Heart right ventricle (tissue), 16 donors: ENCODE measurements at regions of chr1 and their contacts with region 1.

Region 1: DNA sequence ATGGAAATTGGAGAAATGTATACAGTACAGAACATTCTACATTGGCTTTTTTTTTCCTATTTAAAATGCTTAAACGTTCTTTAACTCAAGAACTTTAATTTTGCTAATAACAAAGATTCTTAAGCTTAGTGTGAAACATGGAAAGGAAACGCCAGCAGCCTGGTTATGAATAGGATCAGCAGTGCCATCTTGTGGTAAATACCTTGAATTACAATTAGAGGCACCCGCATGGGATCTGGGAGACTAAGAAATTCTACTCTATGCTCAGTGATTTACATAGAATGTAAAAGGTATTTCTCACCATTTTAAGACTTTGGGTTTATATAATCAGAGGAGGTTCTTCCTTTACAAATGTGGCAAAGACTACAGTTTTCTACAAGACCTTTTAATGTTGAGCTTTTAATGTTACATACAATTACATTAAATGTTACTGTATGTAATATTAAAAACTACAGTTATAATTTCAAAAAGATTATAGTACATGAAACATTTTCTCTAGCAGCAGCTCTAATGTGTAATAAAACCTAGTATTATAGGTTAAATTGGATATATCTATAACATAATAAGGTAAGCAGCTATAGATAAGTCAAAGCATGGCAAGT is 32.1 kb upstream of the APOBEC4 start:
- DNase-seq: peak in 1 of 2 donors; percentile 29
- ATAC-seq: peak in 5 of 8 donors; percentile 61 to 79 (median 72)
- H3K4me3 ChIP-seq: no peak overlapping the region
- H3K27ac ChIP-seq: no peak overlapping the region
- H3K4me1 ChIP-seq: peaks cover 0 to 32% (median 4%) of the 10 kb centered on the region in 9 donors
- H3K27me3 ChIP-seq: no peaks in the 10 kb centered on the region
- CTCF ChIP-seq: peak; percentile 67 to 90 (median 84)

Region 2: GRCh38 chr1:183635606-183636333 is 49.4 kb before region 1 on chr1 and contains the start of gene ARPC5:
- intact Hi-C with region 1: no loop called
- DNase-seq: peak; percentile 96 to 98
- ATAC-seq: peak; percentile 95 to 98 (median 96)
- H3K4me3 ChIP-seq: peak within 1 kb of the TSS; percentile 67 to 92 (median 86)
- H3K27ac ChIP-seq: peak within 1 kb of the TSS; percentile 68 to 98 (median 94)
- H3K4me1 ChIP-seq: peaks cover 3 to 54% (median 42%) of the 10 kb centered on the region in 9 donors
- H3K27me3 ChIP-seq: no peaks in the 10 kb centered on the region
- CTCF ChIP-seq: no peak
- total RNA-seq, gene ARPC5: 23.8 to 60.2 (median 28.1) TPM

Region 3: DNA sequence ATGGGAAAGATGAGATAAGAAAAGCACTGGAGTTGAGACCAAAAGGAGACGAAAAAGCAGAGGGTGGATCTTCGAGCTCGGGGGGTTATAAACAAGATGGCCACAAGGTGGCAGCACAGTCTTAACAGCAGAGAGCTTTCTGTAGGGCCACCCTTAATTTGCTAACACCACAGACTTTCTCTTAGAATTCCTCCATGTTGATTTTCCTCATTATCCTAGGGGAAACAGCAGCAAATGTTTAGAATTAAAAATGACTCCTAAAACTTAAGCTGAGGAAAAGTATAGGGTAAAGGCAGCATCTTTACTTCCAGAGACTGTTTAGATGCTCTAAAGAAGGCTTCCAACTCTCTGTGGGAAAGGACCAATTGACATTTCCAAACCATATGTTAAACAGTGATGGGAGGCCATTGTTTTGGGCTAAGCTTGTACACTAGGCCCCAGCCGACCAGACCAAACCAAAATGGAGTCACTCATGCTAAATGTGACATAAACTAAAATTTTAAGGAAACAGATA is 29.6 kb before region 1 on chr1:
- intact Hi-C with region 1: loop called in 2 of 10 experiments (anchors 5 kb)
- DNase-seq: peak; percentile 67 to 84
- ATAC-seq: peak; percentile 62 to 89 (median 83)
- H3K4me3 ChIP-seq: no peak overlapping the region
- H3K27ac ChIP-seq: peak overlapping the region in 1 of 10 donors; percentile 78
- H3K4me1 ChIP-seq: peaks cover 6 to 56% (median 41%) of the 10 kb centered on the region in 9 donors
- H3K27me3 ChIP-seq: no peaks in the 10 kb centered on the region
- CTCF ChIP-seq: peak; percentile 84 to 95 (median 92)

Region 4: DNA sequence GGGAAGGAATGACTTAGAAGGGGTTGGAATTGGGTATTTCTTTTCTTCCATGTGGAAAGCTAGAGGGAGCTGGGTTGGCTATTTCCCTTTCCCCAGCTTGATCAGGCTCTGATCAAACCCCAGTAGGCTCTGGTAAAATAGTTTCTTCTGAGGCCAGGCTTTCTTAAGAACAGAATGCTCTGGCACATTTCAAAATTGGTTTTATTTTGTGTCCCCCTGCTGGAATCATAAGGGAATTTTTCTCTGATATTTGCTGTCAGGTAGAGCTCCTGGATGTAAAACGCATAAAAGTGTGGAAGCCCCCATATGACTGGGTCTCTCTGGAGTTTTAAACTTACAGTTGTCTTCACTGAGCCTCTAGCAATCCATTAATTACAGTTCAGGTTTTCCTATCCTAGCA is 15.0 kb before region 1 on chr1:
- intact Hi-C with region 1: loop called in 1 of 10 experiments (anchors 2 kb)
- DNase-seq: no peak
- ATAC-seq: no peak
- H3K4me3 ChIP-seq: no peak overlapping the region
- H3K27ac ChIP-seq: no peak overlapping the region
- H3K4me1 ChIP-seq: peaks cover 0 to 23% (median 17%) of the 10 kb centered on the region in 9 donors
- H3K27me3 ChIP-seq: no peaks in the 10 kb centered on the region
- CTCF ChIP-seq: no peak

Region 5: DNA sequence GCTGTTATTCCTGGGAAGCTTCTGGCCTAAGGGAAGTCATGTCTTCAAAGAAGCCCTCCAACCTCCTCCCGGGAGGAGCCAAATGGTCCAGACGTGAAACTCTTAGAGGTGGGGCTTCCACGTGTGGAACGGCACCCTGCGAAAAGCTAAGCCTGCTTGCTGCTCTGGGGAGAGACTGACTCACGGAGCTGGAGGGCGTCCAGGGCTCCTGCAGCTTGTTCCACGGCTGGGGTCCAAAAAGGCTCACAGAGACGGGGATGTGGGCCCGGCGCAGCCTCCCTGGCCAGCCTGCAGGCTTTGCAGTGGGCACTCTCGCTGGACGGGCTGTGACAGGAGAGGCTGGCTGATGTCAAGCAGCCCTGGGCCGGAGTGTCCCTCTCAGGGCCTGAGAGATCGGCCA is 247.2 kb after region 1 on chr1:
- intact Hi-C with region 1: no loop called
- DNase-seq: peak; percentile 85
- ATAC-seq: peak; percentile 81 to 91 (median 86)
- H3K4me3 ChIP-seq: peak overlapping the region in 2 of 10 donors; percentile 10 to 11
- H3K27ac ChIP-seq: peak overlapping the region; percentile 12 to 78 (median 50)
- H3K4me1 ChIP-seq: peaks cover 9 to 35% (median 22%) of the 10 kb centered on the region in 9 donors
- H3K27me3 ChIP-seq: no peaks in the 10 kb centered on the region
- CTCF ChIP-seq: no peak